ENCODE measurements at regions of chr17 and their contacts with region 1.

Region 1: DNA sequence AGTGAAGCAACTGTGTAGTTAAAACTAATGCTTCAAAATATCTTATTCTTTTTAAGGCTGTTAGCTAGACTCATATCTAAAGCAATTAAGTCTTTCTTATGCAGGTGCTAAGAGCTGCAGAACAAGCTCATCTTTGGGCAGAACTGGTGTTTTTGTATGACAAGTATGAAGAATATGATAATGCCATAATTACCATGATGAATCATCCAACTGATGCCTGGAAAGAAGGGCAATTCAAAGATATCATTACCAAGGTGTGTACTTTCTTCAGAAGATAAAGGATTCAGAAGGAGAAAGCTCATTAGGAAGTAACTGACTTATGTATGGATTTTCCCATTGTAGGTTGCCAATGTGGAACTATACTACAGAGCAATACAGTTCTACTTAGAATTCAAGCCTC is 23.9 kb downstream of the PTRH2 start:
- DNase-seq: no peak
- CTCF ChIP-seq: no peak

Region 2: DNA sequence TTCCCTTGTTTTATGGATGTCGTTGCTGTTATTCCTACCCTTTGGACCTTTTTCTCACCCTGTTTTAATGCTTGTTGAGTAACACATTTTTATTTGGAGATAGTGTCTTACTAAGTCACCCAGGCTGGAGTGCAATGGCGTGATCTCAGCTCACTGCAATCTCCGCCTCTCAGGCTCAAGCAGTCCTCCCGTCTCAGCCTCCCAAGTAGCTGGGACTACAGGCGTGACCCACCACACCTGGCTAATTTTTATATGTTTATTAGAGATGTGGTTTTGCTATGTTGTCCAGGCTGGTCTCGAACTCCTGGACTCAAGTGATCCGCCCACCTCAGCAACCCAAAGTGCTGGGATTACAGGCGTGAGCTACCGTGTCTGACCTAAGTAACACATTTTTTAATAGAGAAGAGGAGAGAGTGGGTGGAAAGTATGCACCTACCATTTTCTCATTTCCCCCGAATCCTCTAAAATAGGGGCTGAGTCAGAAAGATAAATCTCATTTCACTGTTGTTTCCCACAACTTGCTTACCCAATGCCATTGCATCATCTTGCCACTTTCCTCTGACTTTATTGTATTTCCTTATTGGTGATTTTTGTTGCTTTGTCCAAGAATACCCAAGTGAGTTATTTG is 110.9 kb before region 1 on chr17:
- CTCF ChIA-PET with region 1: no interaction called
- POLR2A ChIA-PET with region 1: no interaction called
- DNase-seq: peak; percentile 55
- CTCF ChIP-seq: no peak

Region 3: DNA sequence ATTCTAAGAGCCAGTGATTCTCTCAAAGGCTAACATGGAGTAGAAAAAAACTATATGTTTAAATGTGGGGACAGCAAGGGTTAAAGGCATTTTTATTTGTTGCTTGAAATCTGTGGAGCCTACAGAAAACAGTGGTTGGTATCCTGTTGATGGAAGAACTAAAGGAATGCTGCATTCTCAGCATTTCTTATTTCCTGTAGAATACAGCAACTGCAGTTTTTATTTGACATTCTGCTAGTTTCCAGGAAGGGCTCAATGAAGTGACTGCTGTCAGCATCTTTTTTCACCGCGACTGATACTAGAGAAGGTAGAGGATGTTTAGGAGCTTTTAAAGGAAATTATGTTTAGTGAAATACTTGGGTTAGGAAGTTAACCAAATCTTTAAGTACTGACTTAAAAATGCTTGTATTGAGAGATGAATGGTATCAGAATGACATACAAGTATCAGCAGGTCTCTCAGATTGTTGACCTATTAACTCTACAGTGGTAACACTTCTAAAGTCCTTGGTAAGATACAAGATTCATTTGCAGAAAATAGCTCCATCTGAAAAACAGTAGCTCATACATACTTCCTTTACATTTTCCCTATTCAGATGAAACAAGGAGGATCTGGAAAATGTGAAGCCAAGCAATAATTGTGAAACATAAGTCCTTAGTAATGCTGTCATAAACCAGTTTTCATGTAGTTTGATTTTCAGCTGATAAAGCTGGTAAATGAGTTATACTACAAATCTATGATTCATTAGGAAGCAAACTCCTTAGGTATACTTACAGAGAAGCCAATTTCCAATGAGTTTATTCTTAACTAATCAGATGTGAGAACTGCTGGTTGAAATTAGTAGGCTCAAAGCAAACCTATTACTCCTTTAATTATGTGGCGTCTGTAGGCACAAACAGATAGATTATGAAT is 48.4 kb before region 1 on chr17:
- CTCF ChIA-PET with region 1: no interaction called
- POLR2A ChIA-PET with region 1: no interaction called
- DNase-seq: no peak
- CTCF ChIP-seq: no peak

Region 4: DNA sequence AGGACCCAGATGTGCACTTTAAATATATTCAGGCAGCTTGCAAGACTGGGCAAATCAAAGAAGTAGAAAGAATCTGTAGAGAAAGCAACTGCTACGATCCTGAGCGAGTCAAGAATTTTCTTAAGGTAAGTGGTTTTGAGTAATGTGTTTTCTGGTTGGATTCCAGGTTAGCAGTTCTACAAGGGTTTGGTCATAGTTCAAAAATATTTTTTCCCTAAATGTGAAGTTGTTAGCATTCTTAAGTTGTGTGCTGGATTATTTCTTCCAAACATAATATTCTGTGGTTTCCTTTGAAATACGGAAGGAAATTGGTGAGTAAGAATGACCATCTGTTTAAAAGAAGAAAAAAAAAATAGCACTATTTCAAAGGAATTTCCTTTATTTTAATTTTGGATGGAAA is 14.5 kb before region 1 on chr17:
- CTCF ChIA-PET with region 1: interaction called, 17 read pairs
- POLR2A ChIA-PET with region 1: no interaction called
- DNase-seq: no peak
- CTCF ChIP-seq: no peak

Region 5: GRCh38 chr17:59702304-59702703 is 19.0 kb after region 1 on chr17:
- CTCF ChIA-PET with region 1: interaction called, 11 read pairs
- POLR2A ChIA-PET with region 1: no interaction called
- DNase-seq: no peak
- CTCF ChIP-seq: no peak

Measured in GM10248 (cell line).